Activated T-helper 2 cell treated with anti-CD3 and anti-CD28 coated beads, Interferon-gamma antibody, Interleukin-2, Interleukin-4, amounts not matched to agents 10 μg/mL and 5 μg/mL and 100 μg/mL, durations not matched to agents 14 hours and 24 hours and 36 hours (primary cell): ENCODE measurements at regions of chr1 and their contacts with region 1.

Region 1: DNA sequence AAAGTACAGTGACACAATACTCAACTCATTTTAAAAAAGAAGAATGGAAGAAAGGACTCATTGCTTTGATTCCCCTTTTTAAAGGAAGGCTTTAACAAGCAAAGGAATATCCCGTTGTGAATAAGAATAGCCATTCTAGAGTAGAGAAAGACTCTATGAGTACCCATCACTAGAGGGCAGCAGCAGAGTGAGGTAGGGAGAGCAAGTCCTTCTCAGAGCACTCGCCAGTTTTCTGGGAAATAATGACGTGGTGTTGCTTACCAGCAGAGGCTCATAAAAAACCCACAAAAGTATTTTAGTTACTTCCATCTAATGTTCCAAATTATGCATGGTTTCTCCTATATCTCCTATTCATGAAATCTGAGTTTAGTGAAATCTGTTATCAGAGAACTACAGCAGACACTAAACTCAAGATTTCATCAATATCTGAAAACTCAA is 74.6 kb downstream of the USP24 start:
- DNase-seq: peak; percentile 50
- H3K4me3 Mint-ChIP-seq: no peak overlapping the region
- H3K27ac Mint-ChIP-seq: peak overlapping the region; percentile 46
- H3K4me1 Mint-ChIP-seq: peaks cover 17% of the 10 kb centered on the region
- H3K27me3 Mint-ChIP-seq: no peaks in the 10 kb centered on the region

Region 2: GRCh38 chr1:54640863-54641836 is 499.4 kb before region 1 on chr1 and contains the start of gene MROH7:
- intact Hi-C with region 1: no loop called
- DNase-seq: no peak
- H3K4me3 Mint-ChIP-seq: no peak within 1 kb of the TSS
- H3K27ac Mint-ChIP-seq: no peak within 1 kb of the TSS
- H3K4me1 Mint-ChIP-seq: no peaks in the 10 kb centered on the region
- H3K27me3 Mint-ChIP-seq: peaks cover 7% of the 10 kb centered on the region
- total RNA-seq, gene MROH7: 0.16 TPM in 2 replicates

Region 3: DNA sequence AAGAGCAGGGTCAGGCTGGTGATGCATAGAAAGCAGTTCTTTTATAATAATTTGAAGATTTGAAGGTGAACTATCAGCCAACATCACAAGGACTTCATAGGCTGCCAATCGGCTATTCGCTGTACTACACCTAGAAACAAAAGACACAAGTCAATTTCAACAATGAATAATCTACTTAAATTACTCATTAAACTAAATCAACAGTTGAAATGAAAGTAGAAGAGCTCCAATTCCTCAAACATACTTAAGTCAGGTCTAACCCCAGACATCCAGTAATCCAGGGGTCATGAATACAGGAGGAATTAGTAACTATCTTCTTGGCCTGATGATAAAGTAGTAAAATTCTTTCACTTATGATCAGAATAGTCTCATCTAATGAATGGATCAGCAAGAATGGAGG is 36.7 kb before region 1 on chr1:
- intact Hi-C with region 1: no loop called
- DNase-seq: no peak
- H3K4me3 Mint-ChIP-seq: no peak overlapping the region
- H3K27ac Mint-ChIP-seq: no peak overlapping the region
- H3K4me1 Mint-ChIP-seq: no peaks in the 10 kb centered on the region
- H3K27me3 Mint-ChIP-seq: no peaks in the 10 kb centered on the region

Region 4: GRCh38 chr1:55127827-55128343 is 12.7 kb before region 1 on chr1:
- intact Hi-C with region 1: loop called (anchors 1 kb)
- DNase-seq: no peak
- H3K4me3 Mint-ChIP-seq: peak overlapping the region; percentile 11
- H3K27ac Mint-ChIP-seq: peak overlapping the region; percentile 83
- H3K4me1 Mint-ChIP-seq: peaks cover 32% of the 10 kb centered on the region
- H3K27me3 Mint-ChIP-seq: no peaks in the 10 kb centered on the region

Region 5: DNA sequence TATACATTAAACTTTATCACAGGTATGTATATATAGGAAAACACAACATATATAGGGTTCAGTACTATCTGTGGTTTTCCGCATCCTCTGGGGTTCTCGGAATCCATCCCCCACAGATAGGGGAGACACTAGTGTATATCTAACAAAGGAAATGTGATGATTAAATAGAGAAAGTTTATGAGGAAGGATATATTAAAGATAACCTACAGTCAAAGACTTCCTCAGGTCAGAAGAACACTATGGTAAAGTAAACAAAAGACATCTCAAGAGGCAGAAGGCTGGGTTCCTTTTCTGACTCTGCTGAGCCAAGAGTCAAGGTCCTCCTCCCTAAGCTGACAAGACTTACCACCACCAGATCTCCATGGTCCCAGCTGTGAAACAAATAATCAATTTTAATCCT is 62.5 kb after region 1 on chr1:
- intact Hi-C with region 1: loop called (anchors 2 kb)
- DNase-seq: no peak
- H3K4me3 Mint-ChIP-seq: no peak overlapping the region
- H3K27ac Mint-ChIP-seq: peak overlapping the region; percentile 5
- H3K4me1 Mint-ChIP-seq: peaks cover 60% of the 10 kb centered on the region
- H3K27me3 Mint-ChIP-seq: no peaks in the 10 kb centered on the region

Region 6: DNA sequence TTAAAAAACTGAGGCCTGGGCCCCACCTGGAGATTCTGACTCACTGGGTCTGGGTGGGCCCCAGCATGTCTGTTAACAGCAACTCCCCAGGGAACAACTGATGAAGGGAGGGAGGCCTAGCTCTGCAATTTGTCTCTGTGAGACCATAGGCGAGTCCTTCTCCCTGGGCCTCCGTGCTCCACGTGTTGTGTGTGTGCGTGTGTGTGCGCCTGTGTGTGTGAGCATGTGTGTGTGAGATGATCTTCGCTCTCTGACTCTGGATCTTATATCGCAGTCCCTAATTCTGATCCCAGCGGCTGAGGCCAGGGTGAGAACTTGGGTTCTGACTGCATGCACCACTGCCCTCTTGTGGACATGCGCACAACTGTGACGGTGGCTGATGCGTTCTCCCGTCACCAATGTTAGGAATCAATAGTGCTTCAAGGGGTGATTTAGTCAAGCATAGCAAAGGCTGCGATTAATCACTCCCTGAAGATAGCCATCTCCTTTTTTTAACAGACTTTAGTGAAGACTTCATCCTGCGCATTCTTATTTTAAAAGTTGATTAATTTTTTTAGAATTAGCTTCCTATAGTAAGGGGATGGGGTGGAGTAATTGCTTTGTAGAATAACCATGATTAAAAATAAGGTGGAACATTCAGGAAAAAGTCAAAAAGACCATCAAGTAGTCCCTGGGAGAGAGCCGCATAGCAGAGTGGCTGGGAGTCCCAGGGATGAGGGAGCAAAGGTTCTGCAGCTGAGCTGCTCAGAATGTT is 137.0 kb after region 1 on chr1:
- intact Hi-C with region 1: loop called (anchors 1 kb)
- DNase-seq: peak; percentile 68
- H3K4me3 Mint-ChIP-seq: no peak overlapping the region
- H3K27ac Mint-ChIP-seq: peak overlapping the region; percentile 56
- H3K4me1 Mint-ChIP-seq: peaks cover 33% of the 10 kb centered on the region
- H3K27me3 Mint-ChIP-seq: peaks cover 10% of the 10 kb centered on the region

Region 7: GRCh38 chr1:56584910-56585528 is 1444.5 kb after region 1 on chr1:
- intact Hi-C with region 1: loop called (anchors 10 kb)
- DNase-seq: no peak
- H3K4me3 Mint-ChIP-seq: no peak overlapping the region
- H3K27ac Mint-ChIP-seq: no peak overlapping the region
- H3K4me1 Mint-ChIP-seq: no peaks in the 10 kb centered on the region
- H3K27me3 Mint-ChIP-seq: peaks cover 16% of the 10 kb centered on the region